BJ (cell line): ENCODE measurements at regions of chrX and their contacts with region 1.

Region 1: DNA sequence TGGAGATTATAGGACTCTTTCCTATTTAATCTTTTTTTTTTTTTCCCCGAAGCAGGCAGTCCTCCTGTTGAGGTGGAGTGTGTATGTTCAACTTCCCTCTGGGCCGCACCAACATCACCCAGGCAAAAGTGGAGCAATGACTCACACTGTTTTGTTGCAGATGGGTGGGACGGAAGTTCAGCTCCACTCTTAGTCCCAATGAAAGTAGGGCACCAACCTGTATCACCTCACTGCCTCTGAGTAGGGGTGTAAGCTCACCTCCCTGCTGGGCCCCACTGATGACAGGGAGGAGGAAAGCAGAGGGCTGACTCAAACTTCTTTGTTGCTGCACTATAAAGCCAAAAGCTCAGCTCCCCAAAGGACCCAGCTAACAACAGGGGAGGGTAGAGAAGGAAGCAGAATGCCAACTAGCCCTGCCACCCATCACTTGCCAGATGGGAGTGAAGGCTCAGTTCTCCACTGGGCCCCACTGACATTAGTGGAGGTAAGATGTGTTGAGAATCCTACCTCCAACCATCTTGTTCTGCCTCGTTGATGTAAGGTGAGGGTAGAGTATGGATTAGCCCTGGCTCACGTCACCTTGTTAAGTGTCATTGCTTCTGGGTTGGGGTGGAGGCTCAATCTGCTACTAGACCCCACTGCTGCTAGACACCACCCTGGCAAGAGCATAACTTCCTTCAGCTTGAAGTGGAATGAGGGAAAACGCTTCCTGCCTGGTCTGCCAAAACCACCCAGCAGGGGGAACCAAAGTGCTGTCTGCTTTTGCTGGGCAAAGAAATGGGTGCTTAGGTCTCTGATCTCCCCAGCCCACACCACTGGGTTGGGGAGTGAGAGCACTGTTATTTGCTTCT is 14.1 kb downstream of the RPS6KA3 start:
- DNase-seq: no peak
- H3K4me3 ChIP-seq: no peak overlapping the region
- H3K27me3 ChIP-seq: no peaks in the 10 kb centered on the region
- CTCF ChIP-seq: peak; percentile 69

Region 2: GRCh38 chrX:20237864-20238263 is 14.7 kb before region 1 on chrX:
- CTCF ChIA-PET with region 1: no interaction called
- POLR2A ChIA-PET with region 1: no interaction called
- DNase-seq: no peak
- H3K4me3 ChIP-seq: no peak overlapping the region
- H3K27me3 ChIP-seq: no peaks in the 10 kb centered on the region
- CTCF ChIP-seq: no peak

Region 3: GRCh38 chrX:20445109-20445508 is 192.5 kb after region 1 on chrX:
- CTCF ChIA-PET with region 1: interaction called, 12 read pairs
- POLR2A ChIA-PET with region 1: no interaction called
- DNase-seq: no peak
- H3K4me3 ChIP-seq: no peak overlapping the region
- H3K27me3 ChIP-seq: no peaks in the 10 kb centered on the region; the same call in 1 of the 2 replicates
- CTCF ChIP-seq: no peak